Caco-2 (cell line): ENCODE measurements at regions of chr17 and their contacts with region 1.

Region 1: DNA sequence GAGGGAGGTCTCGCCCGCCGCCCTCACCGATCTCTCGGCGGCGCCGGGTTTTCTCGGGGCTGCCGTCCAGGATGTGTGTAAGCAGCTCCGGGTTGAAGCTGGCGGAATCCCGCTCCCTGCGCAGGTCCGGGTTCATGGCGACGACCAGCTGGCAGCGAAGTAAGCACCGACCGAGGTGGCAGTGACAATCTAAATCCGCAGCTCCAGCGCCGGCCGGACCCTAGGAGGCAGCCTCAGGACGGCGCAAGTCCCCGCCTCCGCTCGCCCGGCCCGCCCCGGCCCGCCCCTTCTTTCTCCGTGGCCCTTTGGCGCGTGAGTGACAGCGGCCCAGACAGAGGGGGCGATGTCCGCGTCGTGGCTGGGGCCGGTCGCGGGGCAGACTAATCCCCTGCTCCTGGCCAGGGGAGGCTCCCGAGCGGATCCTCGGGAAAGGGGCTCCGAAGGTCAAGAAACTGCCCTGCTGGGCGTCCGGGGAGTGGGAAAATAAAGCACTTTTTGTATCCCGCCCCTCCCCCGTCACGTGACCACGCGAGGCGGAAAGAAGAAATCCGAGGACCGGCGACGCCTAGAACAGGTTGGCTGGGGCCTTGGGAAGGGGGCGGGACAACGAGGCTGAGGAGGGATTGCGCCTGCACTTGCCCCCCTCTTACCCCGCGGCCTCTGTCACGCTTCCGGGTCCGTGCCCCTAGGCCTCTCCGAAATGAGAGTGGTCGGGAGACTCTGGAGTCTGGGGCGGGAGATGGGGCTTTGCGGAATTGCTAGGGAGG is at the starts of genes ACOX1 and TEN1:
- DNase-seq: peak; percentile 99
- H3K4me3 ChIP-seq: peak within 1 kb of the TSS; percentile 88
- H3K4me3 Mint-ChIP-seq: peak within 1 kb of the TSS; percentile 97
- H3K27ac Mint-ChIP-seq: peak within 1 kb of the TSS; percentile 100
- H3K4me1 ChIP-seq: peaks cover 59% of the 10 kb centered on the region
- H3K4me1 Mint-ChIP-seq: peaks cover 49% of the 10 kb centered on the region
- H3K27me3 ChIP-seq: no peaks in the 10 kb centered on the region
- H3K27me3 Mint-ChIP-seq: no peaks in the 10 kb centered on the region
- CTCF ChIP-seq: peak; percentile 24 to 30
- total RNA-seq, gene ACOX1: 43.7 and 48.3 TPM in 2 replicates
- total RNA-seq, gene TEN1: 19.1 and 20.3 TPM in 2 replicates

Region 2: DNA sequence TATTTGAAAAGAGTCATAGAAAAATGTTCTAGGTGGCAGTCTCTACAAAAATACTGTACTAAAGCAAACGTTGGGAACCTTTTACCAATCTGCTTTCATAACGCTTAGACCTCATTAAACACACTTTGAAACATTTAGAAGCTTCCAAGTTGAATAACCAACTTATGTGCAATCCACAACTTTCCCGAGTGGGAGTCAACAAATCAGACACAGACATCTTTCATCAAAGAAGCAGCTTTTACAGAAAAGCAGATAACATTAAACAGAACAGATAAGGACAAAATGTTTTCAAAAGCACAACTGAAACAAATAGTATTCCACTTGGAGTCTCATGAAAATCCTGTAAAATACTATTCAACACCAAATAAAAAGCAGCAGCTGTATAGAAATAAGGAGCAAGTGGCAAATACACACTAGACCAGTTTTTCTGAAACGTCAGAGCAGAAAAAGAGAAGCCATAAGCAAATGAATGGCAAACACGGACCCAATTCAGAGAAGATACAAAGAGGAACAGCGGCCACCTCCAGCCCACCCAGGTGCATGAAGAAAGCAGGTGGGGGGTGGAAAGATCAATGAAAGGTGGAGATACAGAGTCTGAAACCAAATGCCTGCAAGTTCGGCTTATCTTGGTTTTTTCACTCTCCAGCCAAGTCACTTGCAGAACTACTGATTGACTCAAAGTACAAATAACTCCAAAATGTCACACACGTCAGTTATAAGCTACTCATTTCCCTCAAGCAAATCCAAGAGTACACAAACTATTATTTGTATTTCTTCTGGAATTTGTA is 19.9 kb before region 1 on chr17:
- CTCF ChIA-PET with region 1: interaction called, 7 read pairs
- POLR2A ChIA-PET with region 1: interaction called, 10 read pairs
- intact Hi-C with region 1: no loop called
- DNase-seq: peak; percentile 53 to 66
- H3K4me3 ChIP-seq: no peak overlapping the region
- H3K4me3 Mint-ChIP-seq: peak overlapping the region; percentile 54
- H3K27ac Mint-ChIP-seq: peak overlapping the region; percentile 53
- H3K4me1 ChIP-seq: peaks cover 26% of the 10 kb centered on the region
- H3K4me1 Mint-ChIP-seq: peaks cover 14% of the 10 kb centered on the region
- H3K27me3 ChIP-seq: no peaks in the 10 kb centered on the region
- H3K27me3 Mint-ChIP-seq: no peaks in the 10 kb centered on the region
- CTCF ChIP-seq: no peak

Region 3: DNA sequence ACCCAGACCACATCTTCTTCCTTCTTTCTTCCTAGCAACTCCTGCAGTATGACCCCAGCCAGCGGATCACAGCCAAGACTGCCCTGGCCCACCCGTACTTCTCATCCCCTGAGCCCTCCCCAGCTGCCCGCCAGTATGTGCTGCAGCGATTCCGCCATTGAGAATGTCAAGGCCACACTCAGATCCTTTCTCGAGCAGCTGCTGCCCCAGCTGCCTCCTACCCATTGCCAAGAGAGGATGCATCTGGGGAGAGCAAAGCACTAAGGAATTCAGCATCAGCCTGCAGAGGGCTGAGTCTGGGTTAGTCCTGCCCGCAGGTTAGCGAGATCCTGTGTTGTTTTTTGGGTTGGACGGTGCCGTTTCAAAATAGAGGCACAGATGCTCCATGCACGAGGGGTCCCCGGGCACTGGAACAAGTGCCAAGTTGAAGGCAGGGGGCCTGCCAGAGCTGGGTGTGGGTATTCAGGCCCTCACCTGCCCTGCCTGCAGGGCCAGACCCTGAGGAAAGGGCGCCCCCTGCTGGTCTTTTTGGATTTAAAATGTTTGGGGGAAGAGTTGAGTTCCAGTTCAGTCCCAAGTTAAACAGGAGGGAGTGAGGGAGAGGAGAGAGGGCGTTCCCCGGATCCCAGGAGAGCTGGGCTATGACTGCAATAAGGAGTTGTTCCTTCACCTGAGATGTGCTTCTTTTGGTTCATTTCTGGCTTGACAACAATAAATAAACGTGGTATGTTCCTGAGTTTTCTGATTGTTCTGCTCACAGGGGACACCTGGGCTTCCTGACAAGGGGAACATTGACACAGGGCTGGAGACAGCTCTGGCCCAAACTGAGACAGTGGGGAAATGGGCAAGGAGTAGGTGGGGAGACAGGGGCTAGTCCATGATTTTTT is 26.4 kb after region 1 on chr17:
- CTCF ChIA-PET with region 1: interaction called, 12 read pairs
- POLR2A ChIA-PET with region 1: no interaction called
- intact Hi-C with region 1: loop called (anchors 1 kb)
- DNase-seq: peak; percentile 85 to 93
- H3K4me3 ChIP-seq: no peak overlapping the region
- H3K4me3 Mint-ChIP-seq: no peak overlapping the region
- H3K27ac Mint-ChIP-seq: peak overlapping the region; percentile 30
- H3K4me1 ChIP-seq: peaks cover 10% of the 10 kb centered on the region
- H3K4me1 Mint-ChIP-seq: peaks cover 10% of the 10 kb centered on the region
- H3K27me3 ChIP-seq: no peaks in the 10 kb centered on the region
- H3K27me3 Mint-ChIP-seq: no peaks in the 10 kb centered on the region
- CTCF ChIP-seq: peak; percentile 68 to 92

Region 4: DNA sequence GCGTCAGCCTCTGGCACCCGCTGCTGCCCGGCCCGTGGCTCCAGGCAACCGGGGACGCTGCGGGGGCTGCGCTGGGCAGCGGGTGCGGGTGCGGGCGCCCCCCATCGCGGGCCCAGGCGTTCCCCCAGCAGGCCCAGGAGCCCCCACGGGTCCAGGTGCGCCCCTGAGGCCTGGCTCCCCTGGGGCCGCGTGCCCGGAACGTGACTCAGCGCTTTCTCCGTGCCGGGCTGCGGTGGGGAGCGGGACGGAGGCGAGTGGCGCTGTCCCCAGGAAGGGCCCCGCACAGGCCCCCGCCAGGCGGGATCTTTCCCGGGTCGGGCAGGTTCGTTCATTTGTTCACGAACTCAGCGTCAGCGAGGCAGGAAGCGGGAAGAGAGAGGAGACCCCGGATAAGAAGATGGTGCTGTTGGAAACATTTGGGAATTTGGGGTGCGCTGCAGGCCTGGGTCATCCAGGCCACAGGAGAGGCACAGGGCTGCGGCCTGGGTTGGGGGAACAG is 142.9 kb after region 1 on chr17:
- CTCF ChIA-PET with region 1: no interaction called
- POLR2A ChIA-PET with region 1: interaction called, 10 read pairs
- intact Hi-C with region 1: no loop called
- DNase-seq: no peak
- H3K4me3 ChIP-seq: no peak overlapping the region
- H3K4me3 Mint-ChIP-seq: no peak overlapping the region
- H3K27ac Mint-ChIP-seq: peak overlapping the region; percentile 14
- H3K4me1 ChIP-seq: peaks cover 7% of the 10 kb centered on the region
- H3K4me1 Mint-ChIP-seq: peaks cover 33% of the 10 kb centered on the region
- H3K27me3 ChIP-seq: no peaks in the 10 kb centered on the region
- H3K27me3 Mint-ChIP-seq: no peaks in the 10 kb centered on the region
- CTCF ChIP-seq: no peak